GM12878 (cell line): ENCODE measurements at regions of chr16 and their contacts with region 1.

Region 1: DNA sequence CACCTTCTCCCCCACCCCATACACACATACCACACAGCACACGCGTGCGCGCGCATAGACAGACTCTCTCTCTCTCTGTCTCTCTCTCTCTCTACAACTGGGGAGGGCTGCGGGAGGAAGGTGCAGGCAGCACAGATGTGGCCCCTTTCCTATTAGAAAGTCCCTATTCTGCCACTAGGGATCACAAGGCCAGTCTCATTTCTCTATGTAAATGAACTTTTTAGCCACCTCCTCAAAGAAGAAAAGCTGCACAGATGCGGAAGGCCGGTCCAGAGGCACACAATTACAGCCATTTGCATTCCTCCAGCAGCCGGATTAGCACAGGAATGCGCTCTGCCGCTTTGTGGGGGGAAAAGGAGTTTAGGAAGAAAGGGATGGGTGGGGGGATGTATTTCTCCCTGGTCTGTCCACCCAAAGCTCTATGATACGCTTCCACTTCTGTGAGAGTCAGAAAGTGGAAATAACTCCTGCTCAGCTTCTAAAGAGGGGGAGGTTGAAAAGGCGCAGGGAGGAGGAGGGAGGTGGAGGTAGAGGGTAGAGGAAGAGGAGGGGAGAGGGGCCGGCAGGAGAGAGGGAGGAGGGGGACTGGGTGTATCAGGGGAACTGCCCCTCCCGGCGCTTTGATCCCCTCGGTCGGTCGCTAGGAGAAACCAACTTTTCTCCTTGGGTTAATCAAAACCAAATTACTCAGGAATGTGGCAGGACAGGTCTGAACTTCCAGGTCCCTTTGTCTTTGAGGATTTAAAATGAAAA is 11.7 kb downstream of the ZFHX3 start:
- DNase-seq: peak; percentile 75
- ATAC-seq: peak; percentile 80
- H3K4me3 ChIP-seq: peak overlapping the region; percentile 66
- H3K27ac ChIP-seq: peak overlapping the region; percentile 89
- H3K4me1 ChIP-seq: peaks cover 75% of the 10 kb centered on the region
- H3K27me3 ChIP-seq: no peaks in the 10 kb centered on the region
- CTCF ChIP-seq: peak in 2 of 3 experiments; percentile 4 to 9; a peak in 1 of 6 replicates
- EP300 ChIP-seq: peak in 1 of 2 experiments; percentile 18; a peak in 1 of 4 replicates
- POLR2A ChIP-seq: peak; percentile 75
- RAD21 ChIP-seq: 0 out of 2 replicates have a peak, but pooled peaks have one; percentile 14

Region 2: DNA sequence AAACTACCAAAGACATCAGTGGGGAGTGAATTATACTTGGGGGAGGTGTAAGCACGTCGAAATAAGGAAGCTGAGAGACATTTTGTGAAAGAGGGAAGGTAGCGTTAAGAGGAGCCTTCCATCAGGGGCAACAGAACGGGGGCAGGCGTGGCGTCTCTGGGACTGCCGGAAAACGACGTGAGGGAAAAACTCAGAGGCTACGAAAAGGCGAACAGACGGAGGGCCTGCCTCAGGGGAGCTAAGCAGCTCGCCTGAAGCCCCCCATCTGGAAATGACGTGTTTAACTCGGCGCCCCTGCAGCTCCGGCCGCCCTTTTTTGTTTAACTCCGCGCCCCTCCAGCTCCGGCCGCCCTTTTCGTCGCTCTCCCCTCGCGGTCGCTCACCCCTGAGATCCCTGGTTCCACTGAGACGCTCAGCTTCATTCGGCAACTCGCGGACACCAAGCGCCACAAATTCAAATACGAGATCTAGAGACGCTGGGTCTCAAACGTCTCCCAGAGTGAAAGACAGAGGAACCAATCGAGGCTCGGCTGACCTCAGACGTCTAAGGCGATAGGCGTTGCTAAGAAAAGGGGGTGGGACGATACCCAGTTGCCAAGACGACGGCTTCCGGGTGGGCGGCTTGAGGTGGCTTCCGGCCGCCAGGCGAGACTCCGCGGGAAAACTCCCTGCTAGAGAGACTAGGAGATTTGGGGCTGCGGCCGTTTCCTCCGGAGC is 371.6 kb before region 1 on chr16:
- CTCF ChIA-PET with region 1: no interaction called
- POLR2A ChIA-PET with region 1: no interaction called
- RAD21 ChIA-PET with region 1: no interaction called
- SMC1A ChIA-PET with region 1: no interaction called
- in situ Hi-C with region 1: loop called (anchors 10 kb)
- intact Hi-C with region 1: loop called (anchors 10 kb)
- DNase-seq: peak; percentile 94
- ATAC-seq: peak; percentile 98
- H3K4me3 ChIP-seq: peak overlapping the region; percentile 74
- H3K27ac ChIP-seq: peak overlapping the region; percentile 90
- H3K4me1 ChIP-seq: peaks cover under 1% of the 10 kb centered on the region
- H3K27me3 ChIP-seq: no peaks in the 10 kb centered on the region
- CTCF ChIP-seq: no peak
- EP300 ChIP-seq: no peak
- POLR2A ChIP-seq: peak; percentile 84
- RAD21 ChIP-seq: no peak

Region 3: DNA sequence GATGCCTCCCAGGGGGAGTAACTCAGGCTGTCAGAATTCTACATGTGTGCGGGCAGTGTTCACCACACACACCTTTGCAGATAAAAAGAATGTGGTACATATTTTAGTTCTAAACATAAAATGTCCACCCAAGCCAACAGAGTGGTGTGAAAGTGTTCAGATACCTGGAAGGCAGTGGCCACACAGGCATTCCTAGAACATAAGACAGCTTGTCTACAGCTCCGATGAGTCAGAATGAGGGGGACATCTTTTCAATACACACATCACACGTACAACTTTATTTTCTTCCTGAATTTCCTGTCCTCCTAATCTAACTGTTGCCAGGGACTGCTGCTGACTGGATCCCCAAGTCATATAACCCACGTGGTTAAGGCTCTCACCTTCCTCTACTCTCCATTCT is 130.7 kb before region 1 on chr16:
- CTCF ChIA-PET with region 1: no interaction called
- POLR2A ChIA-PET with region 1: no interaction called
- RAD21 ChIA-PET with region 1: no interaction called
- SMC1A ChIA-PET with region 1: no interaction called
- in situ Hi-C with region 1: no loop called
- intact Hi-C with region 1: no loop called
- DNase-seq: no peak
- ATAC-seq: no peak
- H3K4me3 ChIP-seq: no peak overlapping the region
- H3K27ac ChIP-seq: no peak overlapping the region
- H3K4me1 ChIP-seq: no peaks in the 10 kb centered on the region
- H3K27me3 ChIP-seq: no peaks in the 10 kb centered on the region
- CTCF ChIP-seq: no peak
- EP300 ChIP-seq: no peak
- POLR2A ChIP-seq: no peak
- RAD21 ChIP-seq: no peak

Region 4: GRCh38 chr16:73020362-73020884 is 15.8 kb before region 1 on chr16:
- CTCF ChIA-PET with region 1: interaction called, 3 read pairs
- POLR2A ChIA-PET with region 1: interaction called, 5 read pairs
- RAD21 ChIA-PET with region 1: interaction called, 9 read pairs
- SMC1A ChIA-PET with region 1: interaction called, 14 read pairs
- in situ Hi-C with region 1: no loop called
- intact Hi-C with region 1: loop called (anchors 2 kb)
- DNase-seq: no peak
- ATAC-seq: peak; percentile 12; the same call in 1 of the 3 replicates
- H3K4me3 ChIP-seq: no peak overlapping the region
- H3K27ac ChIP-seq: no peak overlapping the region
- H3K4me1 ChIP-seq: peaks cover 16% of the 10 kb centered on the region
- H3K27me3 ChIP-seq: no peaks in the 10 kb centered on the region
- CTCF ChIP-seq: no peak
- EP300 ChIP-seq: no peak
- POLR2A ChIP-seq: no peak
- RAD21 ChIP-seq: no peak

Region 5: GRCh38 chr16:73047518-73048291 is 11.5 kb after region 1 on chr16 and contains the start of gene ZFHX3:
- CTCF ChIA-PET with region 1: interaction called, 5 read pairs
- POLR2A ChIA-PET with region 1: interaction called, 14 read pairs
- RAD21 ChIA-PET with region 1: interaction called, 20 read pairs
- SMC1A ChIA-PET with region 1: interaction called, 16 read pairs
- in situ Hi-C with region 1: no loop called
- intact Hi-C with region 1: no loop called
- DNase-seq: no peak
- ATAC-seq: peak; percentile 84
- H3K4me3 ChIP-seq: peak within 1 kb of the TSS; percentile 80
- H3K27ac ChIP-seq: peak within 1 kb of the TSS; percentile 67
- H3K4me1 ChIP-seq: peaks cover 27% of the 10 kb centered on the region
- H3K27me3 ChIP-seq: no peaks in the 10 kb centered on the region
- CTCF ChIP-seq: peak in 2 of 3 experiments; percentile 24 to 59; a peak in 3 of 6 replicates
- EP300 ChIP-seq: no peak
- POLR2A ChIP-seq: peak; percentile 72
- RAD21 ChIP-seq: peak; percentile 64
- polyA plus RNA-seq, gene ZFHX3: 0.68 to 3.5 TPM

Region 6: GRCh38 chr16:73143576-73144422 is 107.5 kb after region 1 on chr16:
- CTCF ChIA-PET with region 1: no interaction called
- POLR2A ChIA-PET with region 1: no interaction called
- RAD21 ChIA-PET with region 1: no interaction called
- SMC1A ChIA-PET with region 1: no interaction called
- in situ Hi-C with region 1: no loop called
- intact Hi-C with region 1: no loop called
- DNase-seq: no peak
- ATAC-seq: no peak
- H3K4me3 ChIP-seq: no peak overlapping the region
- H3K27ac ChIP-seq: no peak overlapping the region
- H3K4me1 ChIP-seq: no peaks in the 10 kb centered on the region
- H3K27me3 ChIP-seq: peaks cover 0 to 3% of the 10 kb centered on the region in 2 experiments; a peak in 3 of 4 replicates
- CTCF ChIP-seq: no peak
- EP300 ChIP-seq: no peak
- POLR2A ChIP-seq: no peak
- RAD21 ChIP-seq: no peak

Region 7: GRCh38 chr16:73196670-73197069 is 160.4 kb after region 1 on chr16:
- CTCF ChIA-PET with region 1: interaction called, 14 read pairs
- POLR2A ChIA-PET with region 1: no interaction called
- RAD21 ChIA-PET with region 1: interaction called, 5 read pairs
- SMC1A ChIA-PET with region 1: interaction called, 5 read pairs
- in situ Hi-C with region 1: no loop called
- intact Hi-C with region 1: loop called (anchors 10 kb)
- DNase-seq: peak; percentile 24
- ATAC-seq: peak; percentile 98
- H3K4me3 ChIP-seq: no peak overlapping the region
- H3K27ac ChIP-seq: no peak overlapping the region
- H3K4me1 ChIP-seq: no peaks in the 10 kb centered on the region
- H3K27me3 ChIP-seq: no peaks in the 10 kb centered on the region
- CTCF ChIP-seq: peak; percentile 63 to 82 (median 78)
- EP300 ChIP-seq: no peak
- POLR2A ChIP-seq: no peak
- RAD21 ChIP-seq: peak; percentile 78

Region 8: DNA sequence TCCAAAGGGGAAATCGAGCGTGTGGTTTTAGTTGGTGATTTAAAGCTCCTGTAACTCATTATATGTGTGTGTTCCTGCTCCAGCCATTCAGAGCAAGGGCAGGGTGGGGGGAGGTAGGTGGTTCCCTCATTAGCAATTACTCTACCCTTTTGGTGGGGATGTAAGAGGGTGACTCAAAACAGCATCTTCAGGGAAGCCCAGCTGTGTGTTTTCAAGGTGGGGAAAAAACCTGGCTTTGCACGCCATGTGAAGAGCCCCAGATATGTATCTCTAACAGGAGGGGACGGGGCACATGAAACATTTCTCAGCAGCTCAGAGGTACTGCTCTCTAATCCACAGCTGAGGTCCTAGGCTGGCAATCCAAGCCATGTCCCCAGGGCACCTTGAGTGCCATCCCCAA is 253.0 kb after region 1 on chr16:
- CTCF ChIA-PET with region 1: no interaction called
- POLR2A ChIA-PET with region 1: interaction called, 4 read pairs
- RAD21 ChIA-PET with region 1: interaction called, 3 read pairs
- SMC1A ChIA-PET with region 1: no interaction called
- in situ Hi-C with region 1: no loop called
- intact Hi-C with region 1: loop called (anchors 10 kb)
- DNase-seq: peak; percentile 86
- ATAC-seq: peak; percentile 91
- H3K4me3 ChIP-seq: no peak overlapping the region; the same call in 1 of the 2 replicates
- H3K27ac ChIP-seq: peak overlapping the region; percentile 76
- H3K4me1 ChIP-seq: peaks cover 18% of the 10 kb centered on the region
- H3K27me3 ChIP-seq: no peaks in the 10 kb centered on the region
- CTCF ChIP-seq: no peak
- EP300 ChIP-seq: peak; percentile 99
- POLR2A ChIP-seq: peak; percentile 53; the same call in 1 of the 2 replicates
- RAD21 ChIP-seq: peak; percentile 40; the same call in 1 of the 2 replicates